Left cardiac atrium (tissue), 4 donors: ENCODE measurements at regions of chr9 and their contacts with region 1.

Region 1: GRCh38 chr9:109320742-109321448 is at the start of gene EPB41L4B:
- DNase-seq: peak; percentile 88
- ATAC-seq: peak; percentile 81 to 83
- total RNA-seq, gene EPB41L4B: 19.4 to 21.6 TPM

Region 2: DNA sequence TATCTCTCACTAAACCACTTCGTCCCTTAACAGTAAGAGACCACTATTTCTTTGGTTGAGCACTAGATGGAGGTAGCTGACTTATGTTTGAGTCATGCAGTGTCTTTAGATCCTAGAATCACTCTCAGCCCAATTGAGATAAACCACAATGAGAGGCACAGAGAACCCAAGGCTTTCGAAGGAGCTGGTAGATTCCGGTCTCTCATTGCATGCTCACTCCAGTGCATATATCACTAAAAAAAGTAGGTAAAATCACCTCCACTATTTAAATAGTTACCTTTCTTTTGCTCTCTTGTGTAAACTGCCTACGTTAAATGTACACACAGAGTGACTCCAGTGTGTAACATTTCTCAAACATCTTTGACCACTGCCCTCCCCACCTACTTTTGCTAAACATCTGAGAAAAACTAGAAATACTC is 431.2 kb before region 1 on chr9:
- intact Hi-C with region 1: loop called in 1 of 2 experiments (anchors 10 kb)
- DNase-seq: no peak
- ATAC-seq: peak; percentile 62 to 64

Region 3: DNA sequence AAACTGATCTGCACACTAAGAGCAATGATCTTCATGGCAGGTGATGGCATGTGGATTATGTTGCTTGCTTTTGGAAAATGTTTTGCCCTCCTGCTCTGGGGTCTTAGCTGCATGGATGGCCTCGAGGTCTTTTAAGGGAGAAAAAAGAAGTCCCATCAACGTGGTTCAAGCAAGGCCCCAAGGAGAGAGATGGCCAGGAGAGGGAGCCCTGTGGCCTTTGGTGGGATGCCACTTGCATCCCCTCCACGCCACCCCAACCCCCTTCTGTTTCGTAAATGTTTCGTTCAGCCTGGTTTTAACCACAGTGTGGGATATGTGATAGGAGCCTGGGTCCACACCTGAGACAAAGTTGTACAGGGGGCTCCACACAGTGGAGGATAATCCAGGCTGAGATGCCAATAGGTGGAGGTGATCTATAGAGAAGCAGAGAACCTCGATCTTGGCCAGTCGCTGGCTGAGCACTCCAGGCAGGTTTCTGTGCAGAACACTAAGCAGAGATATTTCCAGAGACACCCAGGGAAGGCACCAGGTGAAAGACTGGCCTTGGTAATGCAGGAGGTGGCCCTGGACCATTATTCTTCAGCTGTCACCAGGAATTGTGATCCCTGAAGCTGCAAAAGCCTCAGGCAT is 128.0 kb before region 1 on chr9:
- intact Hi-C with region 1: loop called in 1 of 2 experiments (anchors 2 kb)
- DNase-seq: peak; percentile 46
- ATAC-seq: peak; percentile 34 to 75

Region 4: DNA sequence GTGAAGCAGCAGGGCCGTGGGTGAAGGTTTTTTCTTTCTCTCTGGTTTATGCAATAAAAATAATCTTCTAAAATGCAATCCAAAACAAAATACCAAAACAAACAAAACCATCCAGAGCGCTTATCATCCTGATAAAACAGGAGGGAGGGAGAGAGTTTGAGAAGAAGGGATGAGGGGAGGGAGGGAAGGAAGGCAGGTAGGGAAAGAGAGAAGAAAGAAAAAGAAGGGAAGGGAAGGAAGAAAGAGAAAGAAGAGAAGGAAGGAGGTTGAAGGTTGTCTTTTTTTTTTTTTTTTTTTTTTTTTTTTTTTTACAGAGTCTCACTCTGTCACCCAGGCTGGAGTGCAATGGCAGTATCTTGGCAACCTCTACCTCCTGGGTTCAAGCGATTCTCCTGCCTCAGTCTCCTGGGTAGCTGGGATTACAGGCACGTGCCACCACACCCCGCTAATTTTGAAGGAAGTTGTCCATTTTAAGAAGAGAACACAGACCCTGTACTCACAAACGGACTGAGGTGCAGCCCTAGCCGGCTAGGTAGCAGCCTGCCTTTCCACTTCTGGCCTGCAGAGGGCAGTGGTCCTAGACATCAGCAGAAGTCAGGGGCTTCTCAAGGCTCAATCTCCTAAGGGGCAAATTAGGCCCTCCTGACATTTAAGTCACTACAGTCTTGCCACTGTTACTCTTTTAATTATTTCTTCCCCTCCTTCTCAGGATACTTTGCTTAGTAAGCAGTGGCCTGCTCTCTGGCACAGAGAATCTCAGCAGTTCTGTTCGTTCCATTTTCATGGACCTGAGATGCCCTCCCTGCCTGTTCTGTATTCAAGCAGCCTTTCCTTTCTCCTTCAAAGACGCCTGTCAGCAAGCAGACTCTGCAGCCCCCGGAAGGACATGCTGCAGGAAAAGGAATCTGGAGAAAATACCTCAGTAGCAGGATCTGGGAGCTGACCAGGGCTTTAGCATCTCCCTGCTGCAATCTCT is 76.5 kb before region 1 on chr9:
- intact Hi-C with region 1: loop called (anchors 2 kb)
- DNase-seq: peak; percentile 72
- ATAC-seq: peak; percentile 80 to 92